Caco-2 (cell line): ENCODE measurements at regions of chr3 and their contacts with region 1.

Region 1: DNA sequence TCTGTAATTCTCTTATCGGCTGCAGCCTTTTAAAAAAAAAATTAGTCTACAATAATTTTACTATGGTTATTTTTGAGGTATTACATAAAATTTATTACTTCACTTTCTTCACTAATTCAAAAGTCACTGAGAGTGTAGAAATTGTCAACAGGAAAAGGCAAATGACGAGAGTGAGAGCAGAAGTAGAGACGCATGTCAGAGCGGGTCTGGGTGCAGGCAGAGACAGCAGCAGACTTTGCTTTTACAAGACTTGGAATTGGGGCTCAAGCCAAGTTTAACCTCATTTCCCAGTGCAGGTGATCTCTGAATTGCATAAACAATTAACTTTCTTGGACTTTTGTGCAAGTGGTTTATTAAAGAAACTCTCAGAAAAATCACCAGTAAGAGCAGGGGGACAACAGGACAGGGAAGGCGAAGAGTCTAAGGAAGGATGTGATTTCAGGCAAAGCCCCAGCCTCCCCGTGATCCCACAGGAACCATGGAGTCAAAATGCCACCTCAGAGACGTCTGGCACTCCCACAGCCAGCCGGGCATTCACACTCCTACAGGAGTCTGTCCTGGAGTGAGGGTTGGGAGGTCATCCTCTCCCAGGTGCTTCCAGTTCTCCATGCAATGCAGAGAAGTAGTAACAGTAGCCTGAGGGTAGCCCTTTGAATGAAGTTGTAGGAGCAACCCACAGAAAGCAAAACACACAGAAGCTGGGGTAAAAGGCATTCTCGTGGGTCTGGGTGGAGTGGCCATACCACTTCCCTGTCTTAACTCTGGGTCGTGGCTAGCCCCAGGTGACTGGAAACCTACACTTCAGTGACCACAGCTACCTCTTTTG is 274.0 kb upstream of the TGFBR2 start:
- DNase-seq: no peak
- H3K4me3 ChIP-seq: no peak overlapping the region
- H3K4me3 Mint-ChIP-seq: no peak overlapping the region
- H3K27ac Mint-ChIP-seq: peak overlapping the region; percentile 60
- H3K4me1 ChIP-seq: peaks cover 31% of the 10 kb centered on the region
- H3K4me1 Mint-ChIP-seq: peaks cover 14% of the 10 kb centered on the region
- H3K27me3 ChIP-seq: no peaks in the 10 kb centered on the region
- H3K27me3 Mint-ChIP-seq: no peaks in the 10 kb centered on the region
- CTCF ChIP-seq: no peak

Region 2: GRCh38 chr3:30206051-30206450 is 126.4 kb before region 1 on chr3:
- CTCF ChIA-PET with region 1: no interaction called
- POLR2A ChIA-PET with region 1: no interaction called
- intact Hi-C with region 1: no loop called
- DNase-seq: no peak
- H3K4me3 ChIP-seq: no peak overlapping the region
- H3K4me3 Mint-ChIP-seq: no peak overlapping the region
- H3K27ac Mint-ChIP-seq: no peak overlapping the region
- H3K4me1 ChIP-seq: peaks cover 7% of the 10 kb centered on the region; the same call in 1 of the 2 replicates
- H3K4me1 Mint-ChIP-seq: peaks cover 14% of the 10 kb centered on the region
- H3K27me3 ChIP-seq: no peaks in the 10 kb centered on the region
- H3K27me3 Mint-ChIP-seq: no peaks in the 10 kb centered on the region
- CTCF ChIP-seq: no peak

Region 3: DNA sequence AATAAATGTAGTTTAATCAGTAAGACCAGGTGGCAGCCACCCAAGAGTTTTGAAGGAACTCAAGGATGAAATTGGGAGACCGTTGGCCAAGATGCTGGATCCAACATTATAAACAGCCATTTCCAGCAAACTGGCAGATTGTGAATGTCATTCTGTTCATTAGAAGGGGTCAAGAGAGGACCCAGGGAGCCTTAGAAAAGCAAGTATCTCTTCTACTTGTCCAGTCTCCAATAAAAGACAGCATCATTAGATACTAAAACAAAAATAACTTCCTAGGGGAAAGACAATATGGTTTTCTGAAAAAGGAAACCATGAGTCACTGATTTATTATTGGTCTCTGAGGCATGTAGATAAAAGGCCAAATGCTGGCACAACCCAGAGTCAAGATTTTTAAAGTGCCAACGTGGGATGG is 494.1 kb after region 1 on chr3:
- CTCF ChIA-PET with region 1: no interaction called
- POLR2A ChIA-PET with region 1: no interaction called
- intact Hi-C with region 1: loop called (anchors 5 kb)
- DNase-seq: no peak
- H3K4me3 ChIP-seq: no peak overlapping the region
- H3K4me3 Mint-ChIP-seq: no peak overlapping the region
- H3K27ac Mint-ChIP-seq: no peak overlapping the region
- H3K4me1 ChIP-seq: no peaks in the 10 kb centered on the region
- H3K4me1 Mint-ChIP-seq: no peaks in the 10 kb centered on the region
- H3K27me3 ChIP-seq: no peaks in the 10 kb centered on the region
- H3K27me3 Mint-ChIP-seq: peaks cover 6% of the 10 kb centered on the region
- CTCF ChIP-seq: no peak